Right ventricle myocardium superior (tissue), 1 donor: ENCODE measurements at regions of chr16 and their contacts with region 1.

Region 1: GRCh38 chr16:30091474-30092372 is at the start of gene TBX6:
- DNase-seq: peak; percentile 97
- ATAC-seq: peak; percentile 94
- total RNA-seq, gene TBX6: 1.0 TPM

Region 2: DNA sequence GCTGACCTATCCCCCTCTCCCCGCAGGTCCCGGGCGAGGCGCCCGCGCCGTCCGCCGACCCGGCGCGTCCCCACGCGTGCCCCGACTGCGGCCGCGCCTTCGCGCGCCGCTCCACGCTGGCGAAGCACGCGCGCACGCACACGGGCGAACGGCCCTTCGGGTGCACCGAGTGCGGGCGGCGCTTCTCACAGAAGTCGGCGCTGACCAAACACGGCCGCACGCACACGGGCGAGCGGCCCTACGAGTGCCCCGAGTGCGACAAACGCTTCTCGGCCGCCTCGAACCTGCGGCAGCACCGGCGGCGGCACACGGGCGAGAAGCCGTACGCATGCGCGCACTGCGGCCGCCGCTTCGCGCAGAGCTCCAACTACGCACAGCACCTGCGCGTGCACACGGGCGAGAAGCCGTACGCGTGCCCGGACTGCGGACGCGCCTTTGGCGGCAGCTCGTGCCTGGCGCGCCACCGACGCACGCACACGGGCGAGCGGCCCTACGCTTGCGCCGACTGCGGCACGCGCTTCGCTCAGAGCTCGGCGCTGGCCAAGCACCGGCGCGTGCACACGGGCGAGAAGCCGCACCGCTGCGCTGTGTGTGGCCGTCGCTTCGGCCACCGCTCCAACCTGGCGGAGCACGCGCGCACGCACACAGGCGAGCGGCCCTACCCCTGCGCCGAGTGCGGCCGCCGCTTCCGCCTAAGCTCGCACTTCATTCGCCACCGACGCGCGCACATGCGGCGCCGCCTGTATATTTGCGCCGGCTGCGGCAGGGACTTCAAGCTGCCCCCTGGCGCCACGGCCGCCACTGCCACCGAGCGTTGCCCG is 326.0 kb after region 1 on chr16:
- intact Hi-C with region 1: loop called (anchors 10 kb)
- DNase-seq: peak; percentile 92
- ATAC-seq: peak; percentile 97

Region 3: DNA sequence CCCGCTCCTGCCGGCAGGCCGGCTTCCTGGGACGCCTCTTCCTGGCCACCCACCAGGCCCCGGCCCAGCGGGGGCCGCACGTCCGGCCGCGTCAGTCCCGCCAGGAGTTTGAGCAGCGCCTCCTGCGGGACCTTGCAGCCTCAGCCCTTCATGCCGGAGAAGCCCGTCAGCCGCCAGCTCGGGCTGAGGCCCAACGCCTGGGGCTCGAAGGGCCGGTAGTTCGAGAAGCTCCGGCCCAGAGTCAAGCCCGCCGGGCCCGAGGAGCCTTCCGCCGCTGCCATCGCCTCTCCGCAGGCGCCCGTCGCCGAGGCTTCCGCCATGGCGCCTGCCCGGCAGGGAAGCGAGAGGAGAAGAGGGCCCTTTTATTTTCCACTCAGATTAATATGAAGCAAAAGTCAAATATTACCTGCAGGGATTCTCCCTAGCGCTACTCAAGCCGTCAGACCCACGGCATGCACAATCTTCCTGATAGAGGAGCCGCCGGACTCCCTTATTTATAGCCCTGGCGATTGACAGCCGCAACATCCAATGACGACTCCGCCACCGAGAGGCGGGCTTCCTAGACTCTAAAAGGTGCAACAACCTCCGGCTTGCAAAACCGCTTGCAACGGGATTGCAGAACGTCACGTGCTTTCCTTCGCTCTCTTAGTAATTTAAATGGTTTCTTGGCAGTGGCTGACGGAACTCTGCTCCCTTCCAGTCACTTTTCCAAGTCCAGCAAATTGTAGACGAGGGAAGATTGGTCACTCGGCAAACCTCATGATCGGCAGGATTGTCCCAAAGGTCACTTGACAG is 353.9 kb after region 1 on chr16 and contains the start of gene SEPHS2:
- intact Hi-C with region 1: no loop called
- DNase-seq: peak; percentile 100
- ATAC-seq: peak; percentile 98
- total RNA-seq, gene SEPHS2: 28.6 TPM